Activated naive CD4-positive, alpha-beta T cell treated with anti-CD3 and anti-CD28 coated beads for 36 hours (primary cell): ENCODE measurements at regions of chr3 and their contacts with region 1.

Region 1: DNA sequence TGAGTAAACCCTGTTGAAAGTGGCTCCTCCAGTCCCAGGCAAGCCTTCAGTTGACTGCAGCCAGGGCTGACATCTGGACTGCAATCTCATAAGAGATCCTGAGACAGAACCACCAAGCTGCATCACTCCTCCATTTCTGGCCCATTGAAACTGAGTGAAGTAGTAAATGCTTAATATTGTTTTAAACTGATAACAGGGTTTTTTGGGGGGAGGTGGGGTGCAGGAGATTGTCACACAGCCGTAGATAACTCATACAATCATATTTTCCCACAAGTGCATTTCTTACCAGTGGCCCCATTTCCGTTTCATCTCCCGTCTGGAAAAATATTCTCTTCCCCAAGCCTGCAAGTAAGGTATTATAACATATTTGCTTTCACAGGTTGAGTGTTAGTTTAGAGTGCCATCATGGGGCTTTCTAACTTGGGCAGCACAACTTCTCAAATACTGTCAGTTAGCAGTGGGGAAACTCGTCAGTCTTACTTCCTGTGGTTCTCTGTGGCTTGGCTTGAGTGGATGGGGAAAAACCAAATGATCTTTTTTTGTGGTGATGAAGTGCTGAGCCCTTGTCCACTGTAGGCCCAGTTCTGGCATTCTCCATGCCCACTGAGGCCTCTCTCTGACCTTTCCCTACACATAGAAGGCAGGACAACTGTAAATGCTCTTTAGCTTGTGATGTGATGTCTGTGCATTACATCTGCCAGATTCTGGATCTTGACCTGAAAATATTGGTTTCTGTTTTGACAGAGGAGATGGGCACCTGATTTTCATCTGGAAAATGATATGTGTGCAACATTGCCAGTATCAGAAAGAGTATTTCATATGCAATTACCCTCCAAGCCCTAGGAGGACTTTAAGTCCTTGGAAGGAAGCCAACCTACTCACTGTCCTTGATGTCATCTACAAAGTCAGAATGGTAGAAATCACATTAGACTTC is 90.1 kb upstream of the BHLHE40 start:
- DNase-seq: peak; percentile 61
- H3K4me3 Mint-ChIP-seq: no peak overlapping the region
- H3K27ac Mint-ChIP-seq: peak overlapping the region; percentile 85
- H3K4me1 Mint-ChIP-seq: peaks cover 40% of the 10 kb centered on the region
- H3K27me3 Mint-ChIP-seq: no peaks in the 10 kb centered on the region

Region 2: DNA sequence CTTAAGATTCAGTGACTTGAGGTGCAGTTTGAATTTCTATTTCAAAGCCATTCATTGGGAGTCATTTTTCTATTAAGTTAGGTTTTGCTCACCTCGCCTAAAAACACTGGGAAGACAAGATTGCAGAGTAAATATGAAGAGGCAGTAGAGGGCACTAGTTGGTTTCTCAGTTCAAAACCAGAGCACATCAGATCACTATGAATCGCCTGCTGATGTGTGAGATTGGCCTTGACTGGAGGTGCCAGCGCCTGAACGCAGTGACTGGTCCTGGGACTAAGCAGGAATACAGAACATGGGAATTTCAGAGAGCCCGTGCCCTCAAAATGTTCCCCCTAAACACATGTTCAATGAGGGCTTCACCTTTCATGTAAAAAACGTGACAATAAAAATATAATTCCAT is 167.1 kb before region 1 on chr3:
- CTCF ChIA-PET with region 1: no interaction called
- intact Hi-C with region 1: loop called (anchors 1 kb)
- DNase-seq: peak; percentile 53
- H3K4me3 Mint-ChIP-seq: no peak overlapping the region
- H3K27ac Mint-ChIP-seq: peak overlapping the region; percentile 30
- H3K4me1 Mint-ChIP-seq: peaks cover 6% of the 10 kb centered on the region
- H3K27me3 Mint-ChIP-seq: no peaks in the 10 kb centered on the region

Region 3: DNA sequence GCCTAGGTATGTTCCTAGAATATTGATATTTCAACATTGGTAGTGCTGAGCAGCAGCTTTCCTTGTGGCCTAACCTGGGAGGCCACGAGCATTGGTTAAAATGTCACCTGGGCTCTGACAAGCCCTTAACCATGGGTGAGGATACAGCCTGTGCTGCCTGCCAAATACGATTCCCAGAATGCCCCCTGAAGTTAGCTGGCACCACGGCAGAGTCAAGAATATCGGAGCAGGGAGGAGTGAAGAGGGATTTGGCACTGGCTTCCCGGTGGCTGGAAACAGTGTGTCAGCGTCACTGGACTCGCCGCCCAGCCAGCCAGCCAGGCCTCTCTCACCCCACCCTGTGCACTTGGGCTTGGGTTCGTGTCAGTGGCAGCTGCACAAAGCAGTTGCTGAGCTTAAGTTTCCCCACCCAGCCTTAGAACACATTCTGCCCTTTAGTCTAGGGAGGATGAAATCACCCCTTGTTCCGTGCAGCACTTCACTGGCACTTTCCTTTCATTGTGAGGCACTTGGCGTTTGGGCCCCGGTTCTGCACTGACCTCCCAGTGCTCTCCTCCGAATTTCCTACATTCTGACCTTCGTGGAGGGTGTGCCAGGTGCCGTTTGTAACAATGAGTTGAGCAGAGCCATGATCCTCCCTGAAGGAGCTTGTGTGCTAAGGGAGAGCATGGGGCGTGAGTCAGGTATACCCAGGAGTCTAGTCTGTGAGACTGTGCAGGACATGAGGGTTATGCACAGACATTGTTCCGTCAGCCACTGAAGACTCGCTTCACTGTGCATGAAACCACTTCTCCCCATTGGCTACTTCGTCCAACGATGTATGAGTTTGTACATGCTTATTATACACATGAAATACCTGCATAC is 62.7 kb before region 1 on chr3:
- CTCF ChIA-PET with region 1: interaction called, 3 read pairs
- intact Hi-C with region 1: loop called (anchors 1 kb)
- DNase-seq: no peak
- H3K4me3 Mint-ChIP-seq: no peak overlapping the region
- H3K27ac Mint-ChIP-seq: peak overlapping the region; percentile 57
- H3K4me1 Mint-ChIP-seq: peaks cover 93% of the 10 kb centered on the region
- H3K27me3 Mint-ChIP-seq: no peaks in the 10 kb centered on the region

Region 4: GRCh38 chr3:4834403-4834866 is 54.7 kb before region 1 on chr3:
- CTCF ChIA-PET with region 1: interaction called, 3 read pairs
- intact Hi-C with region 1: loop called (anchors 1 kb)
- DNase-seq: peak; percentile 84
- H3K4me3 Mint-ChIP-seq: peak overlapping the region; percentile 13
- H3K27ac Mint-ChIP-seq: peak overlapping the region; percentile 93
- H3K4me1 Mint-ChIP-seq: peaks cover 85% of the 10 kb centered on the region
- H3K27me3 Mint-ChIP-seq: no peaks in the 10 kb centered on the region

Region 5: GRCh38 chr3:4845882-4846281 is 43.3 kb before region 1 on chr3:
- CTCF ChIA-PET with region 1: interaction called, 3 read pairs
- intact Hi-C with region 1: loop called (anchors 1 kb)
- DNase-seq: no peak
- H3K4me3 Mint-ChIP-seq: no peak overlapping the region
- H3K27ac Mint-ChIP-seq: peak overlapping the region; percentile 93
- H3K4me1 Mint-ChIP-seq: peaks cover 94% of the 10 kb centered on the region
- H3K27me3 Mint-ChIP-seq: no peaks in the 10 kb centered on the region

Region 6: DNA sequence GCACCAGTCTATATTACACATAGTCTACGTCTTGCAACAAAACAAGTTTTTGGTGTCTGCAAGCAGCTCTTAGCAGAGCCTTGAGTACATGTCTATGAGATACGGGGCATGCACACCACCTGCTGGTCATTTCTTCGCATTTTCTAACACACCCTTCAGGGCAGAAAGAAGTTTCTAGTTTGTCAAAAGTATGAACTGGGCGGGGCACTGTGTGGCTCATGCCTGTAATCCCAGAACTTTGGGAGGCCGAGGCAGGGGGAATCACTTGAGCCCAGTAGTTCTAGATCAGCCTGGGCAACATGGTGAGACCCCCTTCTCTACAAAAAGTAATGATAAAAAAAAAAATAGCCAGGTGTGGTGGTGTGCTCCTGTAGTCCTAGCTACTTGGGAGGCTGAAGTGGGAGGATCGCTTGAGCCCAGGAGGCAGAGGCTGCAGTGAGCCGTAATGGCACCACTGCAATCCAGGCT is 168.7 kb after region 1 on chr3:
- CTCF ChIA-PET with region 1: interaction called, 3 read pairs
- intact Hi-C with region 1: loop called (anchors 2 kb)
- DNase-seq: peak; percentile 91
- H3K4me3 Mint-ChIP-seq: no peak overlapping the region
- H3K27ac Mint-ChIP-seq: no peak overlapping the region
- H3K4me1 Mint-ChIP-seq: peaks cover 5% of the 10 kb centered on the region
- H3K27me3 Mint-ChIP-seq: no peaks in the 10 kb centered on the region

Region 7: DNA sequence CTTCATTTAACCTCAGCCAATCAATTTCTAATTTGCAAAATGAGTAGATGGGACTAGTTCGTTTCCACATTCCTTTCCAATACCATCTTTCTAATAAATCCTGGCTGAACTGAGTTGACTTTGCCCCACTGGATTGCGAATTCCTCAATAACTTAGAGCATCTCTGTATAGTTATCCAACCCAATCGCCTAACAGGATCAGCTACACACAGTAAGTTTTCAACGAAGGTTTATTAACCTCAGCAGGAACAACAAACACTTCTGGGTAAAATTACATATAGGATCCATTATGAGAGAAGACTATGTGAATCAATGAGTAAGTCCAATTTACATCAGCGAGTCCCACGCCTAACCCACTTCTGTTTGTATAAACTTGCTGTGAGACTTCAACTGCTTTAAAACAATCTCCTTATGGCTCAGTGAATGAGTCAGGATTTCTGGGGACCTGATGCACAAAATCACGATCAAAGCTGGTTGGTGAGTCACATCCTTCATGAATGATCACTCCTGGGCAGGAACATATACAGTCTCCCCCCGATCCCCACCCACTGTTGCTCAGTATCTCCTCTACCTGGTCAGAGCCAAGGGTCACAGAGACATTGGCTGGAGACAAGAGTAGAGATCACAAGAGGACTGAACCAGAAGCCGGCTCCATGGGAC is 441.1 kb after region 1 on chr3:
- CTCF ChIA-PET with region 1: no interaction called
- intact Hi-C with region 1: no loop called
- DNase-seq: peak; percentile 63
- H3K4me3 Mint-ChIP-seq: no peak overlapping the region
- H3K27ac Mint-ChIP-seq: peak overlapping the region; percentile 15
- H3K4me1 Mint-ChIP-seq: peaks cover 23% of the 10 kb centered on the region
- H3K27me3 Mint-ChIP-seq: peaks cover 3% of the 10 kb centered on the region